ENCODE measurements at regions of chr3 and their contacts with region 1.

Region 1: DNA sequence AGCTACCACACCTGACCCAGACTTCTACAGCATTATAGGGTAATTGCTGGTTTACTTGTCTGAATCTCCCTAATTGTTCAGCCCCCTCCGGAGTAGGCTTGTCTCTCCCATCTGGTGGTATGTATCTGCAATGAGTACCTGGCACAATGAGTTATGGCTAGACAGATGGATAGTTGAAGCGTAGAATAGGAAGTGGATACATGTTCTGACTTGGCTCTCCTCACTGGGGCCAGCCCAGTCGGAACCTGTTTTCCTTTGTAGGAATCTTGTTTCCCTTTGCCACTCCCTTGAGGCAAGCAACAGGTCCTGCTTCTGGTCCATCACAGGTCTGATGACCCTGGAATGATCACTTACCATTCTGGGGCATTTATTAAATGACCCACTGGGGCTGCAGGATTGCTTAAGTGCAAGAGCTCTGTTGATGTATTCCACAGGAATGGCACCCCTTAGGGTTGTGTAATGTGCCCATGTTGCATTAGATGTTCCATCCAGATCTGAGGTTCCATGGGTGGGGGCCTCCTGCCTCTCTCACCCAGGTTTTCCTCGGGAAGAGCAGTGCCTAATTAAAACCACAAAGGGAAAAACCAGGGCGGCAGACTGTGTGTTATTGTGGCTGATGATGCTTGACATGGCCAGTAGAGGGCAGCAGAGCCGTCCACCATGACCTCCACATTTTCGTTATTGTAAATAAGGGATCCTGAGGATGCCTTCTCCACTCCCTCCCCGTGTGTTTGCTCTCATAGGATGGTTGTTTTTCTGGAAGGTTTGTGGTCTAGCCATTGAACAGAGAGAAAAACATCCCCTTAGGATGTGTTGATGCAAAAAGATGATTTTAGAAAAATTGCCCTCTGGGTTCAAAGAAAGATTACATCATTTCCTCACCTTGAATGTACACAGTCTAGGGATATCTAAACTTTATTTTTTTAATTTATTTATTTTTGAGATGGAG is 58.0 kb downstream of the CMTM8 start:
- DNase-seq: peak; percentile 42 to 55
- ATAC-seq: peak; percentile 64 to 85 (median 72)
- H3K4me3 ChIP-seq: no peak overlapping the region
- H3K27ac ChIP-seq: no peak overlapping the region
- H3K4me1 ChIP-seq: no peaks in the 10 kb centered on the region
- H3K27me3 ChIP-seq: no peaks in the 10 kb centered on the region
- CTCF ChIP-seq: peak; percentile 82

Region 2: GRCh38 chr3:32366638-32367397 is 70.3 kb after region 1 on chr3:
- intact Hi-C with region 1: no loop called
- DNase-seq: no peak
- ATAC-seq: no peak
- H3K4me3 ChIP-seq: no peak overlapping the region
- H3K27ac ChIP-seq: no peak overlapping the region
- H3K4me1 ChIP-seq: no peaks in the 10 kb centered on the region
- H3K27me3 ChIP-seq: no peaks in the 10 kb centered on the region
- CTCF ChIP-seq: no peak

Region 3: GRCh38 chr3:32399030-32399620 is 102.6 kb after region 1 on chr3:
- intact Hi-C with region 1: loop called in 1 of 2 experiments (anchors 5 kb)
- DNase-seq: no peak
- ATAC-seq: no peak
- H3K4me3 ChIP-seq: no peak overlapping the region
- H3K27ac ChIP-seq: no peak overlapping the region
- H3K4me1 ChIP-seq: peaks cover 9% of the 10 kb centered on the region
- H3K27me3 ChIP-seq: no peaks in the 10 kb centered on the region
- CTCF ChIP-seq: peak; percentile 46